Naive thymus-derived CD4-positive, alpha-beta T cell (primary cell): ENCODE measurements at regions of chr3 and their contacts with region 1.

Region 1: GRCh38 chr3:113696658-113697499 is 437 bp upstream of the USF3 start:
- DNase-seq: peak; percentile 96 to 100 (median 99)
- ATAC-seq: peak; percentile 93
- H3K4me3 ChIP-seq: peak overlapping the region; percentile 82
- H3K4me3 Mint-ChIP-seq: no peak overlapping the region
- H3K27ac ChIP-seq: peak overlapping the region; percentile 99
- H3K27ac Mint-ChIP-seq: no peak overlapping the region
- H3K4me1 ChIP-seq: peaks cover 11 to 27% of the 10 kb centered on the region in 2 donors
- H3K4me1 Mint-ChIP-seq: peaks cover 23 to 36% (median 29%) of the 10 kb centered on the region in 7 donors
- H3K27me3 ChIP-seq: no peaks in the 10 kb centered on the region
- H3K27me3 Mint-ChIP-seq: no peaks in the 10 kb centered on the region

Region 2: GRCh38 chr3:112128843-112129727 is 1567.8 kb before region 1 on chr3:
- CTCF ChIA-PET with region 1: no interaction called
- POLR2A ChIA-PET with region 1: no interaction called
- intact Hi-C with region 1: loop called in 1 of 2 experiments (anchors 10 kb)
- DNase-seq: peak in 8 of 9 donors; percentile 39 to 88 (median 83)
- ATAC-seq: peak; percentile 82
- H3K4me3 ChIP-seq: no peak overlapping the region
- H3K4me3 Mint-ChIP-seq: peak overlapping the region; percentile 23 to 100 (median 64)
- H3K27ac ChIP-seq: peak overlapping the region; percentile 82
- H3K27ac Mint-ChIP-seq: peak overlapping the region; percentile 87 to 95 (median 93)
- H3K4me1 ChIP-seq: peaks cover 41 to 72% of the 10 kb centered on the region in 2 donors
- H3K4me1 Mint-ChIP-seq: peaks cover 49 to 92% (median 90%) of the 10 kb centered on the region in 7 donors
- H3K27me3 ChIP-seq: no peaks in the 10 kb centered on the region
- H3K27me3 Mint-ChIP-seq: no peaks in the 10 kb centered on the region

Region 3: GRCh38 chr3:113019182-113020137 is 677.4 kb before region 1 on chr3:
- CTCF ChIA-PET with region 1: no interaction called
- POLR2A ChIA-PET with region 1: interaction called, 3 read pairs
- intact Hi-C with region 1: loop called (anchors 1 to 10 kb)
- DNase-seq: peak; percentile 69 to 89 (median 74)
- ATAC-seq: peak; percentile 92
- H3K4me3 ChIP-seq: peak overlapping the region; percentile 81
- H3K4me3 Mint-ChIP-seq: peak overlapping the region; percentile 87 to 97 (median 92)
- H3K27ac ChIP-seq: peak overlapping the region; percentile 96
- H3K27ac Mint-ChIP-seq: peak overlapping the region; percentile 87 to 96 (median 91)
- H3K4me1 ChIP-seq: peaks cover 19 to 21% of the 10 kb centered on the region in 2 donors
- H3K4me1 Mint-ChIP-seq: peaks cover 44 to 87% (median 71%) of the 10 kb centered on the region in 7 donors
- H3K27me3 ChIP-seq: no peaks in the 10 kb centered on the region
- H3K27me3 Mint-ChIP-seq: no peaks in the 10 kb centered on the region

Region 4: GRCh38 chr3:113626503-113627371 is 70.1 kb before region 1 on chr3:
- CTCF ChIA-PET with region 1: no interaction called
- POLR2A ChIA-PET with region 1: no interaction called
- intact Hi-C with region 1: no loop called
- DNase-seq: peak in 2 of 9 donors; percentile 7 to 8
- ATAC-seq: peak; percentile 86
- H3K4me3 ChIP-seq: no peak overlapping the region
- H3K4me3 Mint-ChIP-seq: no peak overlapping the region
- H3K27ac ChIP-seq: no peak overlapping the region
- H3K27ac Mint-ChIP-seq: peak overlapping the region in 8 of 9 donors; percentile 9 to 80 (median 50)
- H3K4me1 ChIP-seq: no peaks in the 10 kb centered on the region
- H3K4me1 Mint-ChIP-seq: peaks cover 0 to 13% (median 4%) of the 10 kb centered on the region in 7 donors
- H3K27me3 ChIP-seq: no peaks in the 10 kb centered on the region
- H3K27me3 Mint-ChIP-seq: no peaks in the 10 kb centered on the region

Region 5: DNA sequence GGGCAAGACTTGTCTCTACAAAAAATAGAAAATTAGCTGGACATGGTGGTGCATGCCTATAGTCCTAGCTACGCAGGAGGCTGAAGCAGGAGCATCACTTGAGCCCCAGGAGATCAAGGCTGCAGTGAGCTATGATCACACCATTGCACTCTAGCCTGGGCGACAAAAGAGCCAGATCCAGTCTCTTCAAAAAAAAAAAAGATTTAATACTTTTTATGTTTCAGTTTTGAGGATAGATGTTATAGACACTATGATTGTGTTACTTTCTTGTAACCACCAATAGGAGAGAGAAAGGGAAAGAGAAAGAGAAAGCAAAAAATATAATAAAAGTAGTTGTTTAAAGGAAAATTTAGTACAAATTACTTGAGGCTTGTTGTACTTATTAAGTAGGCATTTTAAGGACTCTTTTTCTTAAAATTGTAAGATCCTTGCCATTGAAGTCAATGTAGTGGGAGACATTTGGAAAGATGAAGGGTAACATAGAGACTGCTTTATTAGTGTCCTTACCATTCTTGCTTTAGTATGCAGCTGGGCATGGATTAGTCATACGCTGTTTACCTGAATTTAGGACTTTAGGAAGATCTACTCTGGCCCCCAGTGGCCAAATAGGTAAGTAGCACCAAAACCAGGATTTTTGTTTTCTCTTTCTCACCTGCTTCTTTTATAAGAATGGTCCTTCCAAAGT is 215.8 kb after region 1 on chr3:
- CTCF ChIA-PET with region 1: no interaction called
- POLR2A ChIA-PET with region 1: no interaction called
- intact Hi-C with region 1: loop called in 1 of 2 experiments (anchors 1 kb)
- DNase-seq: peak in 7 of 9 donors; percentile 18 to 50 (median 36)
- ATAC-seq: peak; percentile 91
- H3K4me3 ChIP-seq: no peak overlapping the region
- H3K4me3 Mint-ChIP-seq: peak overlapping the region in 8 of 10 donors; percentile 29 to 75 (median 64)
- H3K27ac ChIP-seq: no peak overlapping the region
- H3K27ac Mint-ChIP-seq: peak overlapping the region in 6 of 9 donors; percentile 5 to 76 (median 58)
- H3K4me1 ChIP-seq: no peaks in the 10 kb centered on the region
- H3K4me1 Mint-ChIP-seq: peaks cover 0 to 7% (median 5%) of the 10 kb centered on the region in 7 donors
- H3K27me3 ChIP-seq: no peaks in the 10 kb centered on the region
- H3K27me3 Mint-ChIP-seq: peaks cover 0 to 15% (median 0%) of the 10 kb centered on the region in 5 donors

Region 6: DNA sequence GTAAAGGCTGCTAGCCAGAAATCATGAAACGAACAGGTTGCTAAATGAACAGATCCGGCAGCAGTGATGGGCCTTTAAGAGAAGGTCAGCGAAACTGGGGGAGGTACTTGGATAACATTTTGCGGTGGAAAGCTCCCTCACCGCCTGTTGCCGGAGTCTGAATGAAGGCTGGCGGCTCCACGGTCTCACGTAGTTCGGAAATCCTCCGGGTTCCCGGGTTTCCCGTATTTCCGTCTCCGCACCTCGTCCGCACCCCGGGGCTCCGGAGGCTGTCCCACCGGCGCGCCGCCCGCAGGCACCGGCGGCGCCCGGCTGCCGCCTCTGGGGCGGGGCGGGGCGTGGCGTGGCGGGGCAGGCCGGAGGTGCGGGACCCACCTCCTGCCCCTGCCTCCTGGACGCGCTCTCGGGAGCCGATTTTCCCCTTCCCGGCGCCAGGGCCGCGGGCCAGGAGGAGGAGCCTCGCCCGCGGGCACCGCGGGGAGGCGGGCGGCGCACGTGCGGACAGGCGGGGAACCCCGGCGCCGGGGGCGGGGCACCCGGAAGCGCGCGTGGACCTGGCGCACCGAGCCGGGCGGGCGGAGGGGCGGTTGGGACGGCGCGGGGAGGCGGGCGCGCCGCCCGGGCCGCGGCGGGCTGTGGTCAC is 250.6 kb after region 1 on chr3 and contains the start of gene ZDHHC23:
- CTCF ChIA-PET with region 1: no interaction called
- POLR2A ChIA-PET with region 1: no interaction called
- intact Hi-C with region 1: loop called (anchors 1 kb)
- DNase-seq: peak; percentile 55 to 82 (median 69)
- ATAC-seq: peak; percentile 92
- H3K4me3 ChIP-seq: peak within 1 kb of the TSS; percentile 62
- H3K4me3 Mint-ChIP-seq: peak within 1 kb of the TSS; percentile 79 to 94 (median 86)
- H3K27ac ChIP-seq: peak within 1 kb of the TSS; percentile 42
- H3K27ac Mint-ChIP-seq: peak within 1 kb of the TSS in 7 of 9 donors; percentile 33 to 81 (median 59)
- H3K4me1 ChIP-seq: peaks cover 0 to 8% of the 10 kb centered on the region in 2 donors
- H3K4me1 Mint-ChIP-seq: peaks cover 8 to 20% (median 13%) of the 10 kb centered on the region in 7 donors
- H3K27me3 ChIP-seq: no peaks in the 10 kb centered on the region
- H3K27me3 Mint-ChIP-seq: peaks cover 9 to 60% (median 14%) of the 10 kb centered on the region in 5 donors
- total RNA-seq, gene ZDHHC23: 2.1 to 3.4 (median 3.2) TPM

Region 7: GRCh38 chr3:114056130-114057010 is 359.5 kb after region 1 on chr3 and contains the starts of genes CCDC191 and QTRT2:
- CTCF ChIA-PET with region 1: no interaction called
- POLR2A ChIA-PET with region 1: no interaction called
- intact Hi-C with region 1: loop called (anchors 1 kb)
- DNase-seq: peak; percentile 82 to 99 (median 98)
- ATAC-seq: peak; percentile 97
- H3K4me3 ChIP-seq: peak within 1 kb of the TSS; percentile 95
- H3K4me3 Mint-ChIP-seq: peak within 1 kb of the TSS; percentile 91 to 100 (median 98)
- H3K27ac ChIP-seq: peak within 1 kb of the TSS; percentile 91
- H3K27ac Mint-ChIP-seq: peak within 1 kb of the TSS; percentile 87 to 99 (median 97)
- H3K4me1 ChIP-seq: peaks cover 10 to 12% of the 10 kb centered on the region in 2 donors
- H3K4me1 Mint-ChIP-seq: peaks cover 24 to 60% (median 55%) of the 10 kb centered on the region in 7 donors
- H3K27me3 ChIP-seq: no peaks in the 10 kb centered on the region
- H3K27me3 Mint-ChIP-seq: peaks cover 0 to 2% (median 0%) of the 10 kb centered on the region in 5 donors
- total RNA-seq, gene CCDC191: 3.9 to 8.8 (median 5.1) TPM
- total RNA-seq, gene QTRT2: 29.9 to 38.8 (median 33.8) TPM